ENCODE measurements at regions of chr12 and their contacts with region 1.

Region 1: DNA sequence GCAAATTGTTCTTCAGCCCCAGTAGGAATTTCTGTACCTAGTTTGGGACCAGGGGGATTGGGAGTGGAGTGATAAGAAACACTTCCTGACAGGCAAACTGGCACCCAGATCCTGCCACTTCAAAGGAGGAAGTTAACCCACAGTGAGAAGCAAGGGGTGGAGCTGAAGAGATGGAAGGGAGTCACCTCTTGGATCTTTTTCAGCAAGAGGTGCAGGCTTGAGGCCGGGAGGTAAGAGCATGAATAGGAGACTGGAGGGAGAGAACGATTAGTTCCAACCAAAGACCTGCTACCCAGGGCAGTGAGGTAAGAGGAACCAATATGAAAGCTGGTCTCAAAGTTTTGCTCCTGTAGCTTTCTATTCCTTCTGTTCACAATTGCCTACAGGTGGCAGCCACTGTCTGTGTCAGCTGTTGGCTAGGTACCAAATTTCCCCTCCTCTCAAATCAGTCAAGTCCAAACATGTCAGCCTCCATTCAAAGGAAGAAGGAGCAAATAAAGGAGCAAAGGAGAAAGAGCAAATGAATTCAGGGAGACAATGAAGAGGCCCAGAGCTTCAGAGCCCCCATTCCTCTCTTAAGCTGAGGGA is 14.9 kb upstream of the TAC3 start:
- DNase-seq: peak; percentile 37
- H3K4me3 Mint-ChIP-seq: no peak overlapping the region
- H3K27ac Mint-ChIP-seq: peak overlapping the region; percentile 47
- H3K4me1 Mint-ChIP-seq: peaks cover 38% of the 10 kb centered on the region
- H3K27me3 Mint-ChIP-seq: peaks cover 4% of the 10 kb centered on the region

Region 2: DNA sequence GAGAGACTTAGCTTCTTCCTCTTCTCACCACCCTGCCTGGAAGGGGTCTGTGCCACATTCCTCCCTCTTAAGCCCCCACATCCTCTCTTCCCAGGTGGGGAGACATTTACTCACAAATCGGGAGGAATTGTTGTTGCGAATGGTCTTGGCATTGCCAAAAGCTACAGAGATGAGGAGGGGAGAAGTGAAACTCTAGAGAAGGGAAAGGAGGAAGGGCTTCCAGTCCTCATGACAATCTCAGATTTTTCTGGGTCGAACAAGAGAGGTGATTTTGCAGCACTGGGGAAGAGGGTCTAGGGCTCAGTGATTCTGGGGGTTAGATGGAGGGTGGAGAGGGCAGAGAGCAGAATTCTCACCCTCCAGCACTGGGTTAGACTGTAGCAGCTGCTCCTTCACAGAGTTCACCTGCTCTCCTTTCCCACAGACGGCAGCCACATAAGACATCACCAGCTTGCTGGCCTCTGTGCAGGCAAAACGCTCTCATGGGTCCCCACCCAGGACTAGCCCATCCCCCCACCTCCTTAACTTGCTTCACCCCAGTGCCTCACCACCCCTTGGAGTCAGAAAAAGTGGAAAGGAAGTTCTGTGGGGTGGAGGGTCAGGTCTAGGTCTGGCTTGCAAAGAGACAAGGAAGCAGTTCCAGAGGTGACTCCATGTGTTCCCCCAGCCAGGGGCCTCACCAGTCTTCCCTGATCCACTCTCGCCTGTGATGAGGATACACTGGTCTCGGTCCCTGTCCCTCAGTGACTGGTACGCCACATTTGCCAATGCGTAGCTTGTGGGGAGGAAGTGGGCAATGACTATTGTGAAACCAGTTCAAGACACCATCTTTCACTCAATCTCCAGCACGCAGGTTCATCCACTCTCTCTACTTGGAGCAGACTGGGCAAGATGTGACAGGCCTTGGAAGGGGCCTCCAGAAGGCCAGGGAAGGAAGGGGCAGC is 16.0 kb after region 1 on chr12:
- CTCF ChIA-PET with region 1: interaction called, 15 read pairs
- DNase-seq: peak; percentile 68
- H3K4me3 Mint-ChIP-seq: no peak overlapping the region
- H3K27ac Mint-ChIP-seq: peak overlapping the region; percentile 85
- H3K4me1 Mint-ChIP-seq: peaks cover 34% of the 10 kb centered on the region
- H3K27me3 Mint-ChIP-seq: peaks cover 20% of the 10 kb centered on the region

Region 3: DNA sequence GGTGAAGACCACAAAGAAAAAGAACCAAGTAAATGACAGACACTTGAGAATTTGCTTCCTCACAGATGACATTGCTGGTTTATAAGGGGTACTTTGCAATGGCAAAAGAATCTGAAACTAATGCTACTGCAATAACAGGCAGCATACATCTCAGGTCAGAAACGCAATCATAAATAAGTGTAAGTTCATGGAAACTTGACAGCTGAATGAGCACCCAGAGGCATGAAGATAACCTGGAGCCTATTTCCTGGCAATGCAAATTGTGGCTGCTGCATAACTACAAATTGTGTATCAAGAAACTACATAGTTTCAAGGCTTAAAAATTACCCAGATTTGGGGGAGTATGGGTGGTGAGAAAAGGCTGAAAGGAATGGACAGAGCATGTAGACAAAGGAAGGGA is 27.2 kb after region 1 on chr12:
- CTCF ChIA-PET with region 1: interaction called, 44 read pairs
- DNase-seq: no peak
- H3K4me3 Mint-ChIP-seq: no peak overlapping the region
- H3K27ac Mint-ChIP-seq: no peak overlapping the region
- H3K4me1 Mint-ChIP-seq: peaks cover 9% of the 10 kb centered on the region
- H3K27me3 Mint-ChIP-seq: no peaks in the 10 kb centered on the region

Region 4: GRCh38 chr12:57078519-57079404 is 47.5 kb after region 1 on chr12 and contains the start of gene NEMP1:
- CTCF ChIA-PET with region 1: no interaction called
- DNase-seq: peak; percentile 98
- H3K4me3 Mint-ChIP-seq: peak within 1 kb of the TSS; percentile 79
- H3K27ac Mint-ChIP-seq: peak within 1 kb of the TSS; percentile 97
- H3K4me1 Mint-ChIP-seq: peaks cover 36% of the 10 kb centered on the region
- H3K27me3 Mint-ChIP-seq: no peaks in the 10 kb centered on the region